ENCODE measurements at regions of chr17 and their contacts with region 1.

Region 1: GRCh38 chr17:30021708-30022317 is 80.4 kb downstream of the EFCAB5 start:
- DNase-seq: peak; percentile 66
- H3K4me3 ChIP-seq: no peak overlapping the region
- H3K27ac ChIP-seq: no peak overlapping the region
- H3K4me1 ChIP-seq: no peaks in the 10 kb centered on the region
- H3K27me3 ChIP-seq: no peaks in the 10 kb centered on the region
- CTCF ChIP-seq: peak; percentile 90

Region 2: GRCh38 chr17:29617125-29617480 is 404.7 kb before region 1 on chr17:
- CTCF ChIA-PET with region 1: no interaction called
- POLR2A ChIA-PET with region 1: no interaction called
- intact Hi-C with region 1: loop called (anchors 5 kb)
- DNase-seq: peak; percentile 93
- H3K4me3 ChIP-seq: no peak overlapping the region
- H3K27ac ChIP-seq: no peak overlapping the region
- H3K4me1 ChIP-seq: peaks cover 47% of the 10 kb centered on the region
- H3K27me3 ChIP-seq: no peaks in the 10 kb centered on the region
- CTCF ChIP-seq: peak; percentile 96